B cell (primary cell): ENCODE measurements at regions of chr12 and their contacts with region 1.

Region 1: DNA sequence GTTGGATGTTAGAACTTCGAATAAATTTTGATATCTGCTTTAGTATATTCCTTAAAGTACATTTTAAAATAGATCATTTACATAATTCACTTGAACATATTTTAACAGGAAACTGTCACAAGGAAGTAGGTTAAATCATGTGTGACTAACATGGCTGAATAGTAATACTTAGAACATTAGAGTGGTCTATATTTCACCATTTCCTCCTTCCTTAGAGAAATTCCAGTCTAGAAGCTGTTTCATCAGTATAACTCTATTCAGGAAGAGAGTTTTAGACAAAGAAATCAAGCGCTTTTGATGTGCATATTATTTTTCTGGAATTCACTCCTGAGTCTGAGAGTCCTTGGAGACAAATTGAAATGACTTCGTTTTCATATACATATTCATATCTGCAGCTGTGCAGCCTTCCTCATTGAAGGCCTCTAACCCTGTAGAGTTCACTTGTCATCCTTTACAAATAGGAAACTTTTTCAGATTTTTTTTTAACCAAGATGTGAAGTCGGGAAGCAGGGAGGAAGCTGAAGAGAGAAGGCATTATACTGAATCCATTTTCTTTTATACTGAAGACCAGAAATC is 28.4 kb downstream of the IRAK3 start:
- DNase-seq: peak; percentile 31
- ATAC-seq: peak; percentile 43
- H3K4me3 ChIP-seq: no peak overlapping the region
- H3K4me3 Mint-ChIP-seq: peak overlapping the region; percentile 50
- H3K27ac ChIP-seq: peak overlapping the region; percentile 55 to 61
- H3K27ac Mint-ChIP-seq: peak overlapping the region; percentile 81
- H3K4me1 ChIP-seq: peaks cover 13 to 21% of the 10 kb centered on the region in 2 donors
- H3K4me1 Mint-ChIP-seq: peaks cover 27% of the 10 kb centered on the region
- H3K27me3 ChIP-seq: no peaks in the 10 kb centered on the region
- H3K27me3 Mint-ChIP-seq: no peaks in the 10 kb centered on the region
- CTCF ChIP-seq: no peak

Region 2: DNA sequence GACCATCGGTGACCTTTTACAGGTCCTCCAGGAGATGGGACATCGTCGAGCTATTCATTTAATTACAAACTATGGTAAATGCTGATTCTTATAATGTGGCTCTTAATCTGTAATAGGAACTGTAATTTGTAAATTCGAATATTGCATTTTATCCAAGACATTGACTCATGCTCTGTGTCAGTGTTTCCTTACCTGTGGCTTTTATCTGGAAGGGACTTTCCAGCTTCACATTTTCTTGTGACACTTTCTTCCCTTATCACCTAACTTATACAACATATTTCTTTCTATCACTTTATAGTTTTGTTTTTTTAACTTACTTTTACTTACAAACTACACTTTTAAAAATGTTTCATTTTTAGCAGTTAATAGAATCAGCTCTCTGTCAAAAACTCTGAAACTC is 13.6 kb before region 1 on chr12:
- CTCF ChIA-PET with region 1: no interaction called
- POLR2A ChIA-PET with region 1: no interaction called
- intact Hi-C with region 1: loop called (anchors 2 kb)
- DNase-seq: no peak
- ATAC-seq: no peak
- H3K4me3 ChIP-seq: no peak overlapping the region
- H3K4me3 Mint-ChIP-seq: no peak overlapping the region
- H3K27ac ChIP-seq: no peak overlapping the region
- H3K27ac Mint-ChIP-seq: no peak overlapping the region
- H3K4me1 ChIP-seq: no peaks in the 10 kb centered on the region
- H3K4me1 Mint-ChIP-seq: peaks cover 3% of the 10 kb centered on the region
- H3K27me3 ChIP-seq: no peaks in the 10 kb centered on the region
- H3K27me3 Mint-ChIP-seq: peaks cover 6% of the 10 kb centered on the region
- CTCF ChIP-seq: no peak

Region 3: GRCh38 chr12:66624806-66625205 is 407.4 kb after region 1 on chr12:
- CTCF ChIA-PET with region 1: no interaction called
- POLR2A ChIA-PET with region 1: no interaction called
- intact Hi-C with region 1: no loop called
- DNase-seq: peak; percentile 26
- ATAC-seq: peak; percentile 70
- H3K4me3 ChIP-seq: peak overlapping the region in 1 of 5 experiments; percentile 6
- H3K4me3 Mint-ChIP-seq: peak overlapping the region; percentile 6
- H3K27ac ChIP-seq: peak overlapping the region in 1 of 2 donors; percentile 23
- H3K27ac Mint-ChIP-seq: no peak overlapping the region
- H3K4me1 ChIP-seq: peaks cover 31% of the 10 kb centered on the region in 2 donors
- H3K4me1 Mint-ChIP-seq: peaks cover 58% of the 10 kb centered on the region
- H3K27me3 ChIP-seq: no peaks in the 10 kb centered on the region
- H3K27me3 Mint-ChIP-seq: no peaks in the 10 kb centered on the region
- CTCF ChIP-seq: no peak